A673 (cell line): ENCODE measurements at regions of chr10 and their contacts with region 1.

Region 1: GRCh38 chr10:6637053-6637452 is 57.0 kb upstream of the PRKCQ start:
- DNase-seq: no peak
- H3K4me3 ChIP-seq: no peak overlapping the region
- H3K27ac ChIP-seq: no peak overlapping the region
- H3K4me1 ChIP-seq: no peaks in the 10 kb centered on the region
- H3K27me3 ChIP-seq: peaks cover 66% of the 10 kb centered on the region
- CTCF ChIP-seq: no peak

Region 2: DNA sequence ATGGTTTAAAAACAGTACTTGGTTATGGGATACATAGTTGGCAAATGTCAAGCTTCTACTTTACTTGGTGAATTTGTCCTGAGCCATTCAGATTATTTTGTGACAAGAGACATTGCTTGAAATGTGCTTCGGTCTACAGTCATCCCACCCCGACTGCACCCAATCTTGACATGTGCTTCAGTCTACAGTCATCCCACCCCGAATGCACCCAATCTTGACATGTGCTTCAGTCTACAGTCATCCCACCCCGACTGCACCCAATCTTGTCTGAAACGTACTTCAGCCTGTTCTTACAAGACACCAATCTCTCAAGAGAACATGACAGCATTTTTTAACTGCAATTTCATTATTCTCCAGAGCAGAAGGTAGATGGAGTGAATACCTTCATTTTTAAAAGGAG is 104.7 kb before region 1 on chr10:
- CTCF ChIA-PET with region 1: no interaction called
- POLR2A ChIA-PET with region 1: interaction called, 19 read pairs
- intact Hi-C with region 1: no loop called
- DNase-seq: no peak
- H3K4me3 ChIP-seq: no peak overlapping the region
- H3K27ac ChIP-seq: no peak overlapping the region
- H3K4me1 ChIP-seq: no peaks in the 10 kb centered on the region
- H3K27me3 ChIP-seq: peaks cover 98% of the 10 kb centered on the region
- CTCF ChIP-seq: no peak